RWPE1 (cell line): ENCODE measurements at regions of chrX and their contacts with region 1.

Region 1: DNA sequence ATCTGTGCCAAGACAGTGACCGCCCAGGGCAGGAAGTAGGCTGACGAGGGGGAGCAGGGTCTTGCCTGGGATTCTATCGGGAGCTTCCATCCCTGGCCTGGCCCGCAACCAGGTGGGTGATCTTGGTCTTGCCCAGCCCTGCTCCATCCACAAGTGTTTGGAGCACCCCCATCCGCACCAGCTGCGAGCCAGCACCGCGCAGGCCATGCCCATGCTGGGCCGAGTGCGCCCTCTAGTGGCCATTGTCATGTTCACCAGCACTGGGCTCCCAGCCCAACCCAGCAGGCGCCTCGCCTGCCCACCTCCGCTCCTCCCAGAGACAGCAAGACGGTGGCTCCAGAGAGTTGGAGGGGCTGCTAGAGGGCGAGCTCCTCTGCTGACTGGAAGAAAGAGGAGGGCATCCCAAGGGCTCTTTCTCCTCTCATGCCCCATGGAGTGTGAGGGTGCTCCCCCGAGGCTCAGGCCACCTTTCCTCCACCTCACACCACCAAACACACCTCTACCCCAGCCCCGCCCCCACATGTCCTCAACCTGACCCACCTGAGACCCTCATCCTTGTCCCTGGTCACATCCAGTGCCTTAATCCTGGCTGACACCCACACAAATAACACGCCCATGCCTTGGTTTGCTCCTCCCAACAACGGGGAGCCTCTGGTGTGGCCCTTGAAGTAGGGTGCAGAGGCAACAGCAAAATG is 9.8 kb upstream of the ATP2B3 start:
- DNase-seq: peak; percentile 76
- H3K27ac ChIP-seq: peak overlapping the region; percentile 81
- CTCF ChIP-seq: peak; percentile 72

Region 2: GRCh38 chrX:153353416-153353815 is 154.2 kb before region 1 on chrX:
- CTCF ChIA-PET with region 1: no interaction called
- POLR2A ChIA-PET with region 1: no interaction called
- DNase-seq: no peak
- H3K27ac ChIP-seq: no peak overlapping the region
- CTCF ChIP-seq: no peak

Region 3: GRCh38 chrX:153470435-153471363 is 36.9 kb before region 1 on chrX and contains the start of gene HAUS7:
- CTCF ChIA-PET with region 1: interaction called, 13 read pairs
- POLR2A ChIA-PET with region 1: no interaction called
- DNase-seq: peak; percentile 94
- H3K27ac ChIP-seq: peak within 1 kb of the TSS; percentile 90
- CTCF ChIP-seq: peak; percentile 64